Left ventricle myocardium inferior (tissue), 1 donor: ENCODE measurements at regions of chr3 and their contacts with region 1.

Region 1: GRCh38 chr3:195863121-195864006 is 45.0 kb downstream of the TNK2 start:
- DNase-seq: peak; percentile 89
- H3K4me3 ChIP-seq: no peak overlapping the region
- H3K27ac ChIP-seq: peak overlapping the region; percentile 74
- H3K4me1 ChIP-seq: peaks cover 20% of the 10 kb centered on the region
- H3K27me3 ChIP-seq: no peaks in the 10 kb centered on the region
- CTCF ChIP-seq: peak; percentile 99

Region 2: DNA sequence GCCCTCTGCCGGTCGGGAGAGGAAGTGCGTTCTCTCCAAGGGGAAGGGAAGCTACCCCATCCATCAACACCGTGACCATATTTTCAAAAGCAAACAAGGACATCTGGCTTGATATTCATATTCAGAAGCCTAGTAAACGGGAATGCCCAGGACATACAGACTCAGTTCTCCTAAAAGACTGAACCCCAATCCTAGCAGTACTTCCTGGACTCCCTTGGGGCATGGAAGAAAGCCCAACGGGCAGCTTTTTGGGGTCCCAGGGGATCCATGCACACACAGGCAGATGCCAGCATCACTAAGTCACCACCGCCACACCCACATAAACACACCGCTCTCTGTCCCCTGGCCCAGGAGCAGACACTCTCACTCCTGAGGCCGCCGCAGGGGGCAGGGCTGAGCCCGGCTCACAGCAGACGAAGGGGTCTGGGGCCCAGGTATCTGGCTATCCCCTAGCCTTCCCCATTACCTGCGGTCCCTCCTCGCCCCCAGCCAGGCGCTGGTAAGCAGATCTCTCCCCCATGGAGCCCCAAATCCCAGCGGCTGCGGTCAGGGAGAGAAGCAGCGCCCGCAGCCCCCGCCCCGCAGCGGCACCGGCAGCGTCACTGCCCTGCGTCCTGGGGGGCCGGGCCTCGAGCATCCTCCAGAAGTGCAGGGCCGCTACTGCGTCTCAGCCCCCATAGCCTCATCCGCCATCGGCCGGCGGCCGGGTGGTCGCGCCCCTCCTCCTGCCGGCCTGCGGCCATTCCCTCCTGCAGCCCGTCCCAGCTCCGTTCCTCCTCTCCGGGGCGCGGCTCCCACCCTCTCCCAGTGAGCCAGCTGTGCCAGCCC is 31.6 kb after region 1 on chr3:
- intact Hi-C with region 1: loop called (anchors 2 kb)
- DNase-seq: peak; percentile 49
- H3K4me3 ChIP-seq: peak overlapping the region; percentile 82
- H3K27ac ChIP-seq: peak overlapping the region; percentile 90
- H3K4me1 ChIP-seq: peaks cover 61% of the 10 kb centered on the region
- H3K27me3 ChIP-seq: no peaks in the 10 kb centered on the region
- CTCF ChIP-seq: peak; percentile 94

Region 3: DNA sequence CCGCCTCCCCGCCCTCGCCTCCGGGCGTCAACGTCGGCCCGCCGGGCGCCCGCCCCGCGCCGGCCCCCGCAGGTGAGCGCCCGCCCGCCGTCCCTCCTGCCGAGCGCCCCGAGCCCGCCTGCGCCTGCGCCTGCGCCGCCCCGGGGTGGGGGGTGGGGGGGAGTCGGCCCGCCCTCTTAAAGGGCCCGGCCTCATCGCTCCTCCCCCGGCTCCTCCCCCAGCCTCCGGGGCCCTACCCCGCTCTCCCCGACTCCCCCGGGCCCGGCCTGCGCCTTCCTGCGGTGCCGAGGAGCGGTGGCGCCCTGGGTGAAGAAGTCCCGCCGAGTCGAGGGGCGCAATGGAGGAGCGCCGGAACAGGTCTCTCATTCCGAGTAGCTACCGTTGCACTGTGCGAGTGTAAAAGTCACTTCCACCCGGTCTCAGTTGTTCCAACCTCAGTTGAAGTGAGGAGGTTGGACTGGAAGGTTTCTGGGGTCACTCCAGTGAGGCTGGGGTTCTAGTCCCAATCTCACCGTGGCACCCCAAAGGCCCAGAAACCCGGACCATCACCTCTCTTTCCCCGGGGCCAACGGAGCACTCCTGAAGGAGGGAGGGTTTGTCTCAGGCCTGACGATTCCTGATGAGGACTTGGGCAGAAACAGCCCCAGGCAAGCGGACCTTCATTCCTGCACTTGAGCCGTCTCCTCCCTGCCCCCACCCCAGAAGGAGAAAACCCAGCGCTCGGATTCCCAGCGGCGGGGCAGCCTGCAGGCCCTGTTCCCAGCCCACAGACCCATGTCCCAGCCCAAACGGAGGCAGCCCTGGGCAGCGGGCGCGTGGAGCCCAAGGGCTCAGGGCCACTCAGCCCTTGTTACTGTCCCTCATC is 46.5 kb after region 1 on chr3:
- intact Hi-C with region 1: loop called (anchors 5 kb)
- DNase-seq: peak; percentile 87
- H3K4me3 ChIP-seq: peak overlapping the region; percentile 78
- H3K27ac ChIP-seq: peak overlapping the region; percentile 63
- H3K4me1 ChIP-seq: peaks cover 36% of the 10 kb centered on the region
- H3K27me3 ChIP-seq: no peaks in the 10 kb centered on the region
- CTCF ChIP-seq: no peak

Region 4: GRCh38 chr3:195956571-195956970 is 93.2 kb after region 1 on chr3:
- intact Hi-C with region 1: no loop called
- DNase-seq: no peak
- H3K4me3 ChIP-seq: no peak overlapping the region
- H3K27ac ChIP-seq: no peak overlapping the region
- H3K4me1 ChIP-seq: peaks cover 3% of the 10 kb centered on the region
- H3K27me3 ChIP-seq: no peaks in the 10 kb centered on the region
- CTCF ChIP-seq: no peak

Region 5: DNA sequence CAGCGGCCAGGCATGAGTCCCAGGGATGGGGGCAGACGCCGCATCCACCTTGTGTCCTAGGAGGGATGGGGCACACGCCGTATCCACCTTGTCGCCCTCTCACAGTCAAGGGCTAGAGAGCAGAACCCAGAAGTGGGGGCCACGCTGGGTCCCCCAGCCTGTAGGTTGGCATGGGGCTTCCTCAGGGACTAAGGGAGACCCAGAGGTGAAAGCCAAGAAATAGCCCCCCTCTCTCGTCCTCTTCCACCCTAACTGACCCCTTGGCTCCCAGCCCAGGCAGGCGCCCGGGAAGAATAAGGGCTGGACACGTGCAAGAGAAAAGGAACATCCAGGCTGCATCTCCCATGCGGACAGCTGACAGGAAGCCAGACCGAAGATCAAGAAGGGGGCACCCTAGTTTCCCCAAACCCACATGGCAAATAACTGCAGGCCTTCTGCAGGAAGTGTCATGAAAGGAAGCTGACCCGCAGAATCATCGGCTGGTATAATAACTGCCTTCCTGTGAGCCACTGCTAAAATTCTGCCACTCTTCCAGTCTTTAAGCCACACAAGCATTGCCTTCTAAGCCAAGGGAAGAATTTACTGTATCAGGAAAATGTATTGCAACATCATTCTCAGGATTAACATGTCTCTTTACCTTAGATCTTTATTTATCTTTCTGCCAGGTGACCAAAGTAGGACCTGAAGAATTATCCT is 257.1 kb after region 1 on chr3:
- intact Hi-C with region 1: no loop called
- DNase-seq: peak; percentile 28
- H3K4me3 ChIP-seq: no peak overlapping the region
- H3K27ac ChIP-seq: no peak overlapping the region
- H3K4me1 ChIP-seq: peaks cover 13% of the 10 kb centered on the region
- H3K27me3 ChIP-seq: no peaks in the 10 kb centered on the region
- CTCF ChIP-seq: no peak

Region 6: GRCh38 chr3:196136026-196136984 is 272.9 kb after region 1 on chr3:
- intact Hi-C with region 1: no loop called
- DNase-seq: no peak
- H3K4me3 ChIP-seq: no peak overlapping the region
- H3K27ac ChIP-seq: peak overlapping the region; percentile 28
- H3K4me1 ChIP-seq: no peaks in the 10 kb centered on the region
- H3K27me3 ChIP-seq: no peaks in the 10 kb centered on the region
- CTCF ChIP-seq: no peak

Region 7: DNA sequence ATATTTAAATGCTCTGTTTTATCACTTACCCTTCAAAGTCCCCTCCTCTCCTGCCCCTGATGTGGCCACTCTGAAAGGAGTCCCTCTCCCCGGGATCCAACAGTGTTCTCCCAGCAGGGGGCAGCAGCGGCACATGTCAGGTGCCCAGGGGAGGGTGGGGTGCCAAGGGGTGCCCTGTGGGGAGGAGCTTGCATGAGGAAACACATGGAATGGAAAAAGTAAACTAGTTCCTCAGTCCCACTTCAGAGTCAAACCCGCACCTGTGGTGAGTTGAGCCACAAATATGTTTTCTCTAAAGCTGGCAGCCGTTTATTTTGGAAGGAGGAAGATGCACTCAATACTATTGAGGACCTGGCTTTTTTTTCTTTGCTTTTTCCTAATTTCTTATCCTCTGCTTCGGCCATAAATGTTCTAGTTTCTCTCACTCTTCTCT is 746.0 kb after region 1 on chr3:
- intact Hi-C with region 1: no loop called
- DNase-seq: peak; percentile 86
- H3K4me3 ChIP-seq: no peak overlapping the region
- H3K27ac ChIP-seq: peak overlapping the region; percentile 86
- H3K4me1 ChIP-seq: peaks cover 34% of the 10 kb centered on the region
- H3K27me3 ChIP-seq: no peaks in the 10 kb centered on the region
- CTCF ChIP-seq: peak; percentile 86